Naive thymus-derived CD4-positive, alpha-beta T cell (primary cell): ENCODE measurements at regions of chr15 and their contacts with region 1.

Region 1: GRCh38 chr15:58684036-58684710 is 65.3 kb downstream of the ADAM10 start:
- DNase-seq: no peak
- ATAC-seq: no peak
- H3K4me3 ChIP-seq: no peak overlapping the region
- H3K4me3 Mint-ChIP-seq: peak overlapping the region in 1 of 10 donors; percentile 46
- H3K27ac ChIP-seq: no peak overlapping the region
- H3K27ac Mint-ChIP-seq: peak overlapping the region in 2 of 9 donors; percentile 25 to 48
- H3K4me1 ChIP-seq: no peaks in the 10 kb centered on the region
- H3K4me1 Mint-ChIP-seq: peaks cover 8 to 59% (median 46%) of the 10 kb centered on the region in 7 donors
- H3K27me3 ChIP-seq: no peaks in the 10 kb centered on the region
- H3K27me3 Mint-ChIP-seq: no peaks in the 10 kb centered on the region

Region 2: GRCh38 chr15:58641660-58642059 is 42.5 kb before region 1 on chr15:
- CTCF ChIA-PET with region 1: no interaction called
- POLR2A ChIA-PET with region 1: no interaction called
- intact Hi-C with region 1: no loop called
- DNase-seq: no peak
- ATAC-seq: no peak
- H3K4me3 ChIP-seq: no peak overlapping the region
- H3K4me3 Mint-ChIP-seq: no peak overlapping the region
- H3K27ac ChIP-seq: no peak overlapping the region
- H3K27ac Mint-ChIP-seq: peak overlapping the region in 7 of 9 donors; percentile 24 to 78 (median 53)
- H3K4me1 ChIP-seq: no peaks in the 10 kb centered on the region
- H3K4me1 Mint-ChIP-seq: peaks cover 7 to 19% (median 17%) of the 10 kb centered on the region in 7 donors
- H3K27me3 ChIP-seq: no peaks in the 10 kb centered on the region
- H3K27me3 Mint-ChIP-seq: no peaks in the 10 kb centered on the region

Region 3: DNA sequence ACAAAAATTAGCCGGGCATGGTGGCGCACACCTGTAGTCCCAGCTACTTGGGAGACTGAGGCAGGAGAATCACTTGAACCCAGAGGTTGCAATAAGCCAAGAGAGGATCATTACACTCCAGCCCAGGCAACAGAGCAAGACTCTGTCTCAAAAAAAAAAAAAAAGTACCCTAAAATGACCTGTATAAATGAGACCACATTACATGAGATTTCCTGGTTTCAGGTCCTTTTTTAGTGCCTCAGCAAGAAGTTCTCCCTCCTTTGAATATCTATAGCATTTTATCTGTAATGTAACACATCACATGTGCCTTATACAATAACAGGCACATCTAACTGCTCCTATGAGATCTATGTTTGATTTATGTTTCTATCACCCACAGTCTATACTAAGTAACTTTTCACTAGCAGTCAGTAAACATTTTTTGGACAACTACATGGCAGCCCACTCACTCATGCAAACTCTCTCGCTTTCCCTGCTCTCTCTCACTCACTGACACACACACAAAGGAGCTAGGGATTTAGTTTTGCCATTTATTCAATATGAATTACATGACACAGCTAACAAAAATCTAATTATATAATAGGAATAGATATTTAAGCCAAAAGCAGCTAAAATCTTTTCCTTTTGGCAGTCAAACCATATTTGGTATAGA is 31.2 kb after region 1 on chr15:
- CTCF ChIA-PET with region 1: no interaction called
- POLR2A ChIA-PET with region 1: no interaction called
- intact Hi-C with region 1: loop called in 1 of 2 experiments (anchors 5 kb)
- DNase-seq: no peak
- ATAC-seq: no peak
- H3K4me3 ChIP-seq: no peak overlapping the region
- H3K4me3 Mint-ChIP-seq: no peak overlapping the region
- H3K27ac ChIP-seq: no peak overlapping the region
- H3K27ac Mint-ChIP-seq: no peak overlapping the region
- H3K4me1 ChIP-seq: no peaks in the 10 kb centered on the region
- H3K4me1 Mint-ChIP-seq: peaks cover 16 to 46% (median 25%) of the 10 kb centered on the region in 7 donors
- H3K27me3 ChIP-seq: no peaks in the 10 kb centered on the region
- H3K27me3 Mint-ChIP-seq: no peaks in the 10 kb centered on the region

Region 4: DNA sequence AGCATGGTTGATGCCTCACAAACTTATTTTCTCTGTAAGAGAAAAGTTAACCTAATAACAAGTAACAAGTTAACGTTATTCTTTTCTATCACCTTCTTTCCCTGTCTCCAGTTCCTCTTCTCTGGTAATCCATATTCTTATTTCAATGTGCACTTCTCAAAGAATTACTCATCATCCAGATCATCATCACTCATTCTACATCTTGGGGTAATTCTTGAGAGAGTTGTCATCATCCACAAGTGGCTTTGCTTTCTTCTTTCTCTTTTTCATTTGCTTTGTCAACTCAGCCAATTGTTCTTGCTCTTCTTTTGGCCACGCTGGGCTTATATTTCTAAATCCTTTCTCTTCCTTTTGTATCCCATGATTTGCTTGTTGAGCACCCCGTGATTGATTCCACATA is 282.5 kb after region 1 on chr15:
- CTCF ChIA-PET with region 1: no interaction called
- POLR2A ChIA-PET with region 1: no interaction called
- intact Hi-C with region 1: no loop called
- DNase-seq: no peak
- ATAC-seq: no peak
- H3K4me3 ChIP-seq: no peak overlapping the region
- H3K4me3 Mint-ChIP-seq: no peak overlapping the region
- H3K27ac ChIP-seq: no peak overlapping the region
- H3K27ac Mint-ChIP-seq: no peak overlapping the region
- H3K4me1 ChIP-seq: no peaks in the 10 kb centered on the region
- H3K4me1 Mint-ChIP-seq: peaks cover 0 to 2% (median 0%) of the 10 kb centered on the region in 7 donors
- H3K27me3 ChIP-seq: no peaks in the 10 kb centered on the region
- H3K27me3 Mint-ChIP-seq: peaks cover 0 to 20% (median 0%) of the 10 kb centered on the region in 5 donors